ENCODE measurements at regions of chr16 and their contacts with region 1.

Region 1: GRCh38 chr16:55760310-55761001 is 72.4 kb downstream of the CES1 start:
- DNase-seq: no peak
- H3K4me3 ChIP-seq: no peak overlapping the region
- H3K27ac ChIP-seq: no peak overlapping the region
- H3K4me1 ChIP-seq: no peaks in the 10 kb centered on the region
- H3K27me3 ChIP-seq: no peaks in the 10 kb centered on the region
- CTCF ChIP-seq: no peak

Region 2: DNA sequence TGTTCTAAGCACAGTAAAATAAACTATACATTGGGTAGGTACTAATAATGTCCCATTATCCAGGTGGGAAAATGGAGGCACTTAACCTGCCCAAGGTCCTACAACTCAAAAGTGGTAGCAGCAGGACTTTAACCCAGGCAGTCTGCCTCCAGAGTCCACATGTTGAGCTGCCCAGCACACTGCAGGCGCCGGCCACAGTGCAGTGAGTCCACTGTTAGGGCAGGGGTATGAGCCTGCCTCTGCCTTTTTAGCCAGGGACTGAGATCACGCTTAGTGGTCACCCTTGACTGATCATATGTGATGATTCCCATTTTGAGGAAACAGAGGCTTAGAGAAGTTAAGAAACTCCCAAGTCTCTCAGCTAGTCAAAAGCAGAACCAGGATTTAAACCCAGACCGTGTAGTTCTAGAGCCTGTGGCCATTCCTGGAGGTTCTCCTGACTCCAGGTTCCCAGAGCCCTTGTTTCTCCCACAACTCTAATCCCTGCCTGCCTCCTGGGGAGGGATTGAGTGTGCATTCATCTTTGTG is 64.1 kb after region 1 on chr16:
- CTCF ChIA-PET with region 1: no interaction called
- dilution Hi-C with region 1: no loop called
- in situ Hi-C with region 1: loop called in 1 of 2 experiments (anchors 10 kb)
- intact Hi-C with region 1: no loop called
- DNase-seq: no peak
- H3K4me3 ChIP-seq: no peak overlapping the region
- H3K27ac ChIP-seq: no peak overlapping the region
- H3K4me1 ChIP-seq: no peaks in the 10 kb centered on the region
- H3K27me3 ChIP-seq: no peaks in the 10 kb centered on the region
- CTCF ChIP-seq: no peak